Activated B cell treated with CpG ODN at 0.5 μM for 24 hours (primary cell): ENCODE measurements at regions of chr9 and their contacts with region 1.

Region 1: DNA sequence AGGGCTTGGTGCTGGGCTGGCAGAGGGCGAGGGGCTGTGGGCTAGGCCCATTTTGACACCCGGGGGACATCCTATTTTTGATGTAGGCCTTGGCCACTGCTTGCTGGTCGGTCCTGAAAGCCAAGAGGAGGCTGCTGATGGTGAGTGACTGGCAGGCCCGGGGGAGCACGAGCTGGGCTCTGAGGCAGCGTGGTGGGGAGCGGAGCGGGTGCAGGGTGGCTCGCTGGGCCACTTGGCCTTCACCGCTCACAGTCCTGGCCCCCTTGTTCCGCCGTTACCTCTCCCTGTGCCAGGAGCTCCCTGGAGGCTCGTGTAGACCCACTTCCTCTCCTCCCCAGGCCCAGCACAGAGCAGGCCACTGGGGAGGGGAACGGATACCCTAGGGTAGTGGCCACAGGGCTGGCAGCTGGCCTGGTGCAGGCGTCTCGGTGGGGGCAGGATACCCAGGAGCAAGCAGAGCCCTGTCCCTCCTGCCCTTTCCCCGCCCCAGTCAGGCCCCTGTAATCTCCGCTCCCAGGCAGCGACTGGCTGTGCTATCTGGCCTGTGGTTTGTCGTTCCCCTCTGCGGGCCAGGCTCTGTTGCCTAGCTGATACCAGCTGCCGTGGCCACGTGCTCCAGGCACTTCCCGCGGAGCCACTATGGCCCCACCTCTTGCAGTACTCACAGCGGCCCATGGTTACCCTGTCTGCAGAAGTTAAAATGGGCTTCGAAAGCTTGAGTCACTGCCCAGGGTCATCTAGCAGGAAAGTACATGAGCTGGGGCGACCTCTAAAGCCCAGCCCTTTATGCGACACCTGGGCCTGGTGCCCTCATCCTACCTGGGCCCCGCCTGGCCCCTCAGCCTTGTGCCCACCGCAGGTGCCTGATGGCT is 11.7 kb upstream of the DOLPP1 start:
- DNase-seq: peak; percentile 63
- ATAC-seq: peak; percentile 97
- H3K4me3 Mint-ChIP-seq: peak overlapping the region; percentile 65
- H3K27ac Mint-ChIP-seq: peak overlapping the region; percentile 93
- H3K4me1 Mint-ChIP-seq: peaks cover 26% of the 10 kb centered on the region
- H3K27me3 Mint-ChIP-seq: no peaks in the 10 kb centered on the region
- CTCF ChIP-seq: no peak

Region 2: GRCh38 chr9:129036241-129036922 is 32.8 kb before region 1 on chr9 and contains the start of gene MIGA2:
- CTCF ChIA-PET with region 1: interaction called, 4 read pairs
- POLR2A ChIA-PET with region 1: interaction called, 13 read pairs
- intact Hi-C with region 1: no loop called
- DNase-seq: peak; percentile 89
- ATAC-seq: peak; percentile 99
- H3K4me3 Mint-ChIP-seq: peak within 1 kb of the TSS; percentile 96
- H3K27ac Mint-ChIP-seq: peak within 1 kb of the TSS; percentile 82
- H3K4me1 Mint-ChIP-seq: peaks cover 29% of the 10 kb centered on the region
- H3K27me3 Mint-ChIP-seq: no peaks in the 10 kb centered on the region
- CTCF ChIP-seq: no peak
- total RNA-seq, gene MIGA2: 42.1 and 50.0 TPM in 2 replicates

Region 3: DNA sequence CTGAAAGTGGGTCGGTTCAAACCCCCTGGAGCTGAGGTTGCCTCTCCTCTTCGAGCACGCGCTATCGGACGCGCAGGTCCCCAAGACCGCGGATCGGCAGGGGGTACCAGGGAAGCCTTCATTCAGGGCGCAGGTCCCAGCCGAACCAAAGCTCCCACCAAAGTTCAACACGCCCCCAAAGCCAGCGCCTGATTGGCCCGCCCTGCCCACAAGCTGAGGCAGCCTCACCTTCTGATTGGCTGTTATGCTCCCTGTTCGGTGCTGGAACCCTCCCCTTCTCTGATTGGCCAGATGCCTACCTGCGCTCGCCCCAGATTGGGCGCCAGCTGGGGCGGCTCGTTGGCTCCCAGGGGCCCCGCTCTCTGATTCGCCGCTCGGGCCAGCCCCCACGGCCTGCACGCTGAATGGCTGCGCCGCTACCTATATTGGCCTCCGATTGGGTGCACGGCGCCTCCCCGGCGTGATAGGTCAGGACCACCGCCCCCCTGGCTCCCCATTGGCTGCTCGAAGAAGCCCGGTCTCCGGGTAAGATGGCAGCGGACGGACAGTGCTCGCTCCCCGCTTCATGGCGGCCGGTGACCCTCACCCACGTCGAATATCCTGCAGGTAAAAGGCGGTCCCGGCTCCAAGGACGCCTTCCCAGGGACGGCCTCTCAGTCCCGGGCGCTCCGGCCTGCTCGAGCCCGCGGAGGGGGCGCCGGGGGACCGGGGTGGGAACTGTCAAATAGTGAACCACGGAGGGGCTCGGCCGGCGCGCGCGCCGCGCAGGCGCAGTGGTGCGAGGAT is 11.6 kb after region 1 on chr9 and contains the start of gene DOLPP1:
- CTCF ChIA-PET with region 1: no interaction called
- POLR2A ChIA-PET with region 1: interaction called, 21 read pairs
- intact Hi-C with region 1: loop called (anchors 1 kb)
- DNase-seq: peak; percentile 97
- ATAC-seq: peak; percentile 95
- H3K4me3 Mint-ChIP-seq: peak within 1 kb of the TSS; percentile 87
- H3K27ac Mint-ChIP-seq: peak within 1 kb of the TSS; percentile 76
- H3K4me1 Mint-ChIP-seq: peaks cover 29% of the 10 kb centered on the region
- H3K27me3 Mint-ChIP-seq: no peaks in the 10 kb centered on the region
- CTCF ChIP-seq: no peak
- total RNA-seq, gene DOLPP1: 10.9 and 11.3 TPM in 2 replicates

Region 4: DNA sequence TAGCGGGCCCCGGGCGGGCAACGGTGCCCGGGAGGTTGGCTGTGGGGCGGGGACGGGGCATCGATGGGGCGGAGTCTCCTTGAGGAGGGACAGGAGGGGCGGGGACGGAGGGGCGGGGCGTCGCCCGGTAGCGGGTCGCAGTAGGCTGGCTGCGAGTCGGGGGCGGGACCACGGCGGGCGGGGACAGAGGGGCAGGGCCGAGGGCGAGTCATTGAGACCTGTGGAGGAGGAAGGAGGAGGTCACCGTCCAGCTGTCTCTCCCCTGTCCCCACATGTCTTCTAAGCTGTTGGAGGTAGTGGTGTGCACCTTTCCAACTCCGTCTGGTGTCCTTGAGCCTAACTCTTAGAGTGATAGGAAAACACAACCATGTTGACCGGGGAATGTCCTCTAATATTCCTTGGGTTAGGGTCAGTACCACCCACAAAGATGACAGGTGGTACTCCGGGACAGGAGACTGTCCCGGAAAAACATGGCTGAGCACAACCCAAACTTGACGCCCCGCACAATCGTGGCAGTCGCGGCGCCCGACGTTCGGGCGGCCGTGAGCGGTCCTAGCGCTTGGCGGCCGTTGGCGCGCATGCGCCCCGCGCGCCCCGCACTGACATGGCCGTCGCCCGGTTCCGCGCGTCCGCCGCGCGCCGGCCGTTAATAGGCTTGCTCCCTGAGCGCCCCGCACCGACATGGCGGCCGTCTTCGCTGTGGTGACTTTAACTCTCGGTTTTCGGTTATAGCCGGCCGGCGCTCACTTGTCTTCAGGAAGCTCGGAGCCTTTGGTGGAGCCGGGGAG is 41.7 kb after region 1 on chr9 and contains the starts of genes CRAT and PTPA:
- CTCF ChIA-PET with region 1: no interaction called
- POLR2A ChIA-PET with region 1: no interaction called
- intact Hi-C with region 1: loop called (anchors 5 kb)
- DNase-seq: peak; percentile 91
- ATAC-seq: peak; percentile 88
- H3K4me3 Mint-ChIP-seq: peak within 1 kb of the TSS; percentile 95
- H3K27ac Mint-ChIP-seq: peak within 1 kb of the TSS; percentile 95
- H3K4me1 Mint-ChIP-seq: peaks cover 39% of the 10 kb centered on the region
- H3K27me3 Mint-ChIP-seq: no peaks in the 10 kb centered on the region
- CTCF ChIP-seq: no peak
- total RNA-seq, gene CRAT: 6.8 and 8.2 TPM in 2 replicates
- total RNA-seq, gene PTPA: 65.5 and 67.2 TPM in 2 replicates

Region 5: GRCh38 chr9:129270903-129271431 is 201.7 kb after region 1 on chr9:
- CTCF ChIA-PET with region 1: no interaction called
- POLR2A ChIA-PET with region 1: no interaction called
- intact Hi-C with region 1: no loop called
- DNase-seq: no peak
- ATAC-seq: no peak
- H3K4me3 Mint-ChIP-seq: peak overlapping the region; percentile 46
- H3K27ac Mint-ChIP-seq: no peak overlapping the region
- H3K4me1 Mint-ChIP-seq: peaks cover 22% of the 10 kb centered on the region
- H3K27me3 Mint-ChIP-seq: peaks cover 47% of the 10 kb centered on the region
- CTCF ChIP-seq: no peak